ENCODE measurements at regions of chr19 and their contacts with region 1.

Region 1: DNA sequence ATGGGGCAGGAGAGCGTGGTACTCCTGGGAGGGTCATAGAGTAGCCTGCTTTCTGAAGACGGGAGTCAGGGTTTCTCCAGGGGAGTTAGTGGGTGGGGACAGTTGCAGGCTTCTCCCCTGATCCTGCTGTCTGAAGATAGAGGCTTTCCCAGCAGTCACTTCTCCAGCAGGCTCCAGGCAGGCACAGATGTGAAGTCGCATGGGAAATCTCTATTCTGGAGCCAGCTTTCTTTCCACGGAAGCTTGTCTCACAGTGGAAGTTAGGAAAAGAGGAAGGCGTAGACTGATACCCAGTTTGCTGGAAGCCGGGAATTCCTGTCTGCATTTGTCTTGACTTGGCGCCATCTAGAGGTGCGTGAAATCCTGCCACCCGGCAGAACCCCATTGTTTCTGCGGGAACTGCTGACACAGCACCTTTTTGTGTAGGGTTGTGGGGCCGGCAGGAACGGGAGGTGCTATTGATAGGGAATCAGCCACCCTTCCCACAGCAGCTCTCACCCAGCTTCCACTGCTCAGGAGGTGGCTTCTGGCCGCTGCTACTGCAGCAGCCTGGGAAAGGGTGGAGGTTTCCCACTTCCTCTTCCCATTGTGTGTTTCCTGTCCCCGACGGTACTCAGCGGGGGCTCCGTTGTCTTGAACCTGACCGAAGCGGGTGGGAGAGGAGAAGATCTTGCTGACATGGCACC is 28.5 kb upstream of the NPAS1 start:
- DNase-seq: peak; percentile 77 to 94 (median 86)
- H3K4me3 ChIP-seq: no peak overlapping the region
- H3K27ac ChIP-seq: peak overlapping the region in 3 of 5 donors; percentile 15 to 86 (median 86)
- H3K4me1 ChIP-seq: peaks cover 12 to 32% of the 10 kb centered on the region in 2 donors
- H3K27me3 ChIP-seq: no peaks in the 10 kb centered on the region
- CTCF ChIP-seq: peak; percentile 68 to 88 (median 82)
- POLR2A ChIP-seq: no peak

Region 2: GRCh38 chr19:46753420-46754155 is 237.5 kb before region 1 on chr19:
- intact Hi-C with region 1: loop called in 1 of 2 experiments (anchors 10 kb)
- DNase-seq: peak in 6 of 7 donors; percentile 48 to 76 (median 56)
- H3K4me3 ChIP-seq: no peak overlapping the region
- H3K27ac ChIP-seq: no peak overlapping the region
- H3K4me1 ChIP-seq: peaks cover 7 to 13% of the 10 kb centered on the region in 2 donors
- H3K27me3 ChIP-seq: no peaks in the 10 kb centered on the region
- CTCF ChIP-seq: peak in 5 of 6 experiments; percentile 21 to 48 (median 44)
- POLR2A ChIP-seq: no peak

Region 3: GRCh38 chr19:46766569-46767317 is 224.4 kb before region 1 on chr19:
- intact Hi-C with region 1: loop called in 1 of 2 experiments (anchors 10 kb)
- DNase-seq: peak in 3 of 7 donors; percentile 51 to 70 (median 61)
- H3K4me3 ChIP-seq: no peak overlapping the region
- H3K27ac ChIP-seq: no peak overlapping the region
- H3K4me1 ChIP-seq: no peaks in the 10 kb centered on the region
- H3K27me3 ChIP-seq: no peaks in the 10 kb centered on the region
- CTCF ChIP-seq: peak; percentile 41 to 66 (median 62)
- POLR2A ChIP-seq: no peak

Region 4: DNA sequence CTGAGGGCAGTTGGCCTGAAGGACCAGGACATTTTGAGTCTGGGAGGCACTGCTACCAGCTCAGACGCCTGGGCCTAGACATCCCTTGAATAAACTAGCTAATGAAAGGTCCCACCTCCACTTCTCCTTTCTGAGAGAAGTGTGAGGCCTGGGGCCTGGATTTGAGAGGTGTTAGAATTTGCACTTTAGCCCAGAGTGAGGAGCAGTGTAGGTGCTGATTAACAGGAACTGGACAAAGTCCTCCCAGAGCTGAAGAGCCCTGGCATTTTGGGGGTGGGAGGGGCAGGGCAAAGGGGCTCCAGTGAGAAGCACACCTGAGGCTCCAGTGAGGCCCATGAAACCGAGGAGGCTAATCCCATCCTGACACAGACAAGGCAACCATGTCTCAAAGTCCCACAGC is 187.6 kb before region 1 on chr19:
- intact Hi-C with region 1: no loop called
- DNase-seq: no peak
- H3K4me3 ChIP-seq: no peak overlapping the region
- H3K27ac ChIP-seq: no peak overlapping the region
- H3K4me1 ChIP-seq: no peaks in the 10 kb centered on the region
- H3K27me3 ChIP-seq: no peaks in the 10 kb centered on the region
- CTCF ChIP-seq: no peak
- POLR2A ChIP-seq: no peak

Region 5: DNA sequence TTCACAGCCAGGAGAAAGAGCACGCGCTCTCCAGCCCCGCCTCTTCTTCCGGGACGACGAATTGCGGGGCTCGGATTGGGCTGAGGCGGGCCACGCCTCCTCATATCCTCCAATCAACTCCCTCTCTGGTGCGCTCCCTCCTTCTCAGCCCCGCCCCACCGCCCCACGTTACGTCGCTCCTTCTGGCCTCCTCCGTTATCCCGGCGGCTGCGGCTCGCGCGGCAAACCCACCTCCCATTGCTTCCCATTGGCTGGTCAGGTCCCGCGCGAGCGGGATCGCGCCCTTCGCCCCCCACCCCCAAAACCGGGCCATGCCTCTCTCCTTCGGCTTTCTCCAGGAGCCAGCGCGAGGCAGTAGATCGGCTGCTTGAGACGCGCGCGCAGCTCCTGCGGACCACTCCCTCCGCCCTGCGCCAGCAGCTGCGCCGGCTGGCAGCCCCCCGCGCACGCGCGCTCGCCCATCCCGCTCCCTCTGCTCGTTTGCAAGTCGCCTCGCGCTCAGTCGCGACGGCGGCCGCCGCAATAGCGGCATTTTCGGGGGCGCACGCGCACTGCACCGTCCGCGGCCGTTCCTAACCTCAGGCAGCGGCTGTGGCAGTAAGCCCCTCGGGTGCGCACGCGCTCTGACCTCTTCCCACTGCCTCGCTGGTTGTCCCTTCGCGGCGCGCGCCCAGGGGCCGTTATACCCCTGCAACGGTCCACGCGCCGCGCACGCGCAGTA is 130.8 kb before region 1 on chr19:
- intact Hi-C with region 1: loop called (anchors 5 kb)
- DNase-seq: peak; percentile 98 to 99 (median 99)
- H3K4me3 ChIP-seq: peak overlapping the region; percentile 42 to 99 (median 52)
- H3K27ac ChIP-seq: peak overlapping the region; percentile 91 to 100 (median 99)
- H3K4me1 ChIP-seq: peaks cover 39 to 52% of the 10 kb centered on the region in 2 donors
- H3K27me3 ChIP-seq: no peaks in the 10 kb centered on the region
- CTCF ChIP-seq: peak in 1 of 6 experiments; percentile 9
- POLR2A ChIP-seq: peak; percentile 77 to 92

Region 6: DNA sequence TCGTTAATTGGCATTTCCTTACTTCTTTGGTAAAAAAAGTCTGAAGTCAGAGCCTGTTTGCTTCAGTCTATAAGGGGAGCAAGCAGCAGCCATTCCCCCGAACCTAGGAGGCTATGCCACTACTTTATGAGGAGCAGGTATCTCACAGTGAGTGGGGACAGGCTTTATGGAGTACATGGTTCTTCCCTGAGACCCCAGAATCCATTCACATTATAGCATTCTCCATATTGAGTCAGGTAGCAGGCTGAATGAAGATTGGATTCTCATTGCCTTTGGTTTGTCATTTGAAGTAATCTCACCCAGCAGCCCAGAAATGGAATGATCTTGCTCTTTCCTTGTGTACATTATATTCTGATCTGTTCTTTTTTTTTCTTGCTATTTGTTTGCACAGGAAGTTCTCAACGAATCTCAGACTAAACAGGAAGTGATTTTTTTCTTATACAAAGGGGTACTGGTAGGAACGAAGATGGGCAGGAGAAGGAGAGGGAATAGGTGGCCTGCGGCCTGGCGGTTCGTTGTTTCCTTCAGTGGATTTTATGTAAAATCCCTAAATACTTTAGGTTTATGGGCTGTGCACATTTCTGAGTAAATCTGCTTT is 56.0 kb before region 1 on chr19:
- intact Hi-C with region 1: no loop called
- DNase-seq: no peak
- H3K4me3 ChIP-seq: no peak overlapping the region
- H3K27ac ChIP-seq: no peak overlapping the region
- H3K4me1 ChIP-seq: peaks cover 0 to 10% of the 10 kb centered on the region in 2 donors
- H3K27me3 ChIP-seq: no peaks in the 10 kb centered on the region
- CTCF ChIP-seq: no peak
- POLR2A ChIP-seq: no peak

Region 7: GRCh38 chr19:46954993-46955812 is 35.9 kb before region 1 on chr19:
- intact Hi-C with region 1: no loop called
- DNase-seq: no peak
- H3K4me3 ChIP-seq: peak overlapping the region in 1 of 4 donors; percentile 34
- H3K27ac ChIP-seq: peak overlapping the region in 3 of 5 donors; percentile 34 to 67 (median 65)
- H3K4me1 ChIP-seq: peaks cover 0 to 41% of the 10 kb centered on the region in 2 donors
- H3K27me3 ChIP-seq: no peaks in the 10 kb centered on the region
- CTCF ChIP-seq: no peak
- POLR2A ChIP-seq: no peak